ENCODE measurements at regions of chr14 and their contacts with region 1.

Region 1: GRCh38 chr14:93206793-93207467 is at the starts of genes GON7 and UBR7:
- DNase-seq: peak; percentile 96 to 97 (median 96)
- ATAC-seq: peak; percentile 95 to 99 (median 99)
- H3K4me3 ChIP-seq: peak within 1 kb of the TSS; percentile 63 to 97 (median 86)
- H3K27ac ChIP-seq: peak within 1 kb of the TSS; percentile 56 to 93 (median 88)
- H3K4me1 ChIP-seq: peaks cover 7 to 46% (median 26%) of the 10 kb centered on the region in 12 donors
- H3K27me3 ChIP-seq: no peaks in the 10 kb centered on the region
- CTCF ChIP-seq: peak in 7 of 12 donors; percentile 15 to 55 (median 20)
- POLR2A ChIP-seq: peak in 1 of 2 donors; percentile 73
- total RNA-seq, gene GON7: 10.3 to 25.5 (median 14.8) TPM
- total RNA-seq, gene UBR7: 19.6 to 27.1 (median 23.3) TPM

Region 2: GRCh38 chr14:93184388-93185353 is 22.3 kb before region 1 on chr14 and contains the starts of genes LYSET and MOAP1:
- intact Hi-C with region 1: loop called in 5 of 10 experiments (anchors 1 to 2 kb)
- DNase-seq: peak; percentile 90 to 95 (median 91)
- ATAC-seq: peak; percentile 79 to 96 (median 95)
- H3K4me3 ChIP-seq: peak within 1 kb of the TSS; percentile 68 to 100 (median 96)
- H3K27ac ChIP-seq: peak within 1 kb of the TSS; percentile 76 to 98 (median 96)
- H3K4me1 ChIP-seq: peaks cover 0 to 37% (median 23%) of the 10 kb centered on the region in 12 donors
- H3K27me3 ChIP-seq: no peaks in the 10 kb centered on the region
- CTCF ChIP-seq: peak in 6 of 12 donors; percentile 16 to 42 (median 34)
- POLR2A ChIP-seq: peak in 1 of 2 donors; percentile 81
- total RNA-seq, gene LYSET: 8.8 to 29.3 (median 22.8) TPM
- total RNA-seq, gene MOAP1: 45.7 to 87.0 (median 56.8) TPM

Region 3: GRCh38 chr14:93332853-93333630 is 126.1 kb after region 1 on chr14 and contains the start of gene BTBD7:
- intact Hi-C with region 1: loop called in 4 of 10 experiments (anchors 5 to 10 kb)
- DNase-seq: peak; percentile 95 to 97 (median 96)
- ATAC-seq: peak; percentile 97 to 99 (median 98)
- H3K4me3 ChIP-seq: peak within 1 kb of the TSS; percentile 61 to 98 (median 90)
- H3K27ac ChIP-seq: peak within 1 kb of the TSS; percentile 87 to 99 (median 98)
- H3K4me1 ChIP-seq: peaks cover 0 to 50% (median 28%) of the 10 kb centered on the region in 12 donors
- H3K27me3 ChIP-seq: no peaks in the 10 kb centered on the region
- CTCF ChIP-seq: peak in 4 of 12 donors; percentile 13 to 44 (median 40)
- POLR2A ChIP-seq: peak in 1 of 2 donors; percentile 69
- total RNA-seq, gene BTBD7: 10.6 to 34.0 (median 20.8) TPM

Region 4: DNA sequence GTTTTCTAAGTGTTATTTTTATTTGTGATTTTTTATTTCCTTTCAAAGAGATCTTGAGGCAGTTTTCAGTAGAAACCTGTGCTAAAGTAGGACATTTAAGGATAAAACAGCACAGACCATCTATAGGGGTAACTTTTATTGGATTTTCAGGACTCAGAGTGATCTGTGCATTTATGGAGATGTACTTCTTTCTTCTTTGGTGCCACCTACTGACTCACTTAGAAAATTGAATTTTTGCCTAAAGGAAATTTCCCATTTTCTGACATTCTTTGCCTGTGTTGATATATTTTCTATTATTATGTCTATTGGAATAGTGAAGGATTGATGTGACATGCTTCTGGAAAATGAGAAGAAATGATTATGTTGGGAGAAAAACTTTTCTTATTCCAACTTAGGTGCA is 336.8 kb after region 1 on chr14:
- intact Hi-C with region 1: loop called in 2 of 10 experiments (anchors 5 to 10 kb)
- DNase-seq: no peak
- ATAC-seq: no peak
- H3K4me3 ChIP-seq: no peak overlapping the region
- H3K27ac ChIP-seq: no peak overlapping the region
- H3K4me1 ChIP-seq: peaks cover 0 to 4% (median 0%) of the 10 kb centered on the region in 12 donors
- H3K27me3 ChIP-seq: peaks cover 0 to 4% (median 0%) of the 10 kb centered on the region in 9 donors
- CTCF ChIP-seq: peak in 9 of 12 donors; percentile 6 to 53 (median 19)
- POLR2A ChIP-seq: no peak

Region 5: GRCh38 chr14:93619176-93619793 is 412.4 kb after region 1 on chr14:
- intact Hi-C with region 1: loop called in 3 of 10 experiments (anchors 10 kb)
- DNase-seq: peak in 2 of 5 donors; percentile 29 to 34
- ATAC-seq: no peak
- H3K4me3 ChIP-seq: no peak overlapping the region
- H3K27ac ChIP-seq: no peak overlapping the region
- H3K4me1 ChIP-seq: no peaks in the 10 kb centered on the region
- H3K27me3 ChIP-seq: peaks cover 0 to 5% (median 0%) of the 10 kb centered on the region in 9 donors
- CTCF ChIP-seq: peak; percentile 32 to 71 (median 53)
- POLR2A ChIP-seq: no peak

Region 6: GRCh38 chr14:94026173-94026888 is 819.4 kb after region 1 on chr14 and contains the start of gene OTUB2:
- intact Hi-C with region 1: loop called in 1 of 10 experiments (anchors 10 kb)
- DNase-seq: peak; percentile 96 to 98 (median 98)
- ATAC-seq: peak; percentile 98 to 100 (median 100)
- H3K4me3 ChIP-seq: peak within 1 kb of the TSS; percentile 50 to 80 (median 67)
- H3K27ac ChIP-seq: peak within 1 kb of the TSS in 2 of 12 donors; percentile 23 to 43
- H3K4me1 ChIP-seq: peaks cover 0 to 15% (median 1%) of the 10 kb centered on the region in 12 donors
- H3K27me3 ChIP-seq: no peaks in the 10 kb centered on the region
- CTCF ChIP-seq: no peak
- POLR2A ChIP-seq: no peak
- total RNA-seq, gene OTUB2: 0.09 to 0.60 (median 0.38) TPM

Measured in heart left ventricle (tissue), 16 donors.